ENCODE measurements at regions of chr18 and their contacts with region 1.

Region 1: GRCh38 chr18:11654736-11655605 is 34.1 kb upstream of the GNAL start:
- DNase-seq: peak; percentile 67
- H3K4me3 Mint-ChIP-seq: peak overlapping the region; percentile 24
- H3K27ac Mint-ChIP-seq: no peak overlapping the region
- H3K4me1 Mint-ChIP-seq: peaks cover 27% of the 10 kb centered on the region
- H3K27me3 Mint-ChIP-seq: no peaks in the 10 kb centered on the region
- CTCF ChIP-seq: peak; percentile 88

Region 2: GRCh38 chr18:10579079-10579867 is 1075.7 kb before region 1 on chr18:
- CTCF ChIA-PET with region 1: no interaction called
- POLR2A ChIA-PET with region 1: no interaction called
- intact Hi-C with region 1: no loop called
- DNase-seq: peak; percentile 11
- H3K4me3 Mint-ChIP-seq: no peak overlapping the region
- H3K27ac Mint-ChIP-seq: no peak overlapping the region
- H3K4me1 Mint-ChIP-seq: peaks cover 13% of the 10 kb centered on the region
- H3K27me3 Mint-ChIP-seq: no peaks in the 10 kb centered on the region
- CTCF ChIP-seq: no peak

Region 3: DNA sequence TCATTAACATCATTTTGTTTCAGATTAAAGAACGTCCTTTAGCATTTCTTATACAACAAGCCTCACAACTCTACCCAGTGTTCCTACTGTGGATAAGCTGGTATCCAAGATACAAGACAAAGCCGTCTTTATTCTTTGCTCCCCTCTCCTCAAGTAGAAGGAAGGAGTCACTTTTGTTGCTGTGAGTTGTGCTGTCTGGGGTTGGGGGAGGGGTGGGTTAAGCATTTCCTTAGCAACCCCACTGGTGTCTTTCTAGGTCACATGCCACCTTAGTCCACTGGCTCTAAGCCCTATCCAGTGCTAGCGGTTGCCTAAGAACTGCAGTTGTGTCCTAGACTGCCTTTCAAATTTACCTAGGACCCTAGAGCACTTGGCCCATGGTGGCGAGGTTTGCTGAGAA is 350.0 kb before region 1 on chr18:
- CTCF ChIA-PET with region 1: no interaction called
- POLR2A ChIA-PET with region 1: no interaction called
- intact Hi-C with region 1: no loop called
- DNase-seq: no peak
- H3K4me3 Mint-ChIP-seq: no peak overlapping the region
- H3K27ac Mint-ChIP-seq: no peak overlapping the region
- H3K4me1 Mint-ChIP-seq: peaks cover 7% of the 10 kb centered on the region
- H3K27me3 Mint-ChIP-seq: peaks cover 8% of the 10 kb centered on the region
- CTCF ChIP-seq: no peak

Region 4: DNA sequence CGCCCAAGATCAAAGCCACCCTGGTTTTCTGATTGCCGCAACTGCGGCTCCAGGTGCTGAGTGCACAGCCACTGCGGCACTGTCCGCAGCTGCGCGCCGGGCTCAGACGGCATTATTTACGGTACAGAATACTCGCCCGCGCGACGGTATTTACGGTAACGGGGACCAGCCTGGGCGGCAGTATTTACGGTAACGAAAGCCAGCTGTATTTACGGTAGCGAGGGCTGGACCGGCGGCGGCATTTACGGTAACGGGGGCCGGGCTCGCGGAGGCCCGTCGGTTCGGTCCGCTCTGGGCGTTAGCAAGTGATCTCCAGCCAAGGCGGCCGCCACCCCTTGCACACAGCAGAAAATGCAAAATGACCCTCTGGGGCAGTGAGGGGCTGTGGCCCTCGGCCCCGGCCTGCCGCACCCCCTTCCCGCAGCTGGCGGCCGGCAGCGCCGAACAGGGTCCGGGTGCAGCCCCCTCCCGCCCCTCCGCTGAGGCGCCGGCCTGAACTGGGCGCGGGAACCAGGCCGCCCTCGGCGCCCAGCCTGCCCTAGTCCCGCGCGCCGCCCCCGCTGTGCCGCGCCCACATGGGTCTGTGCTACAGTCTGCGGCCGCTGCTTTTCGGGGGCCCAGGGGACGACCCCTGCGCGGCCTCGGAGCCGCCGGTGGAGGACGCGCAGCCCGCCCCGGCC is 34.2 kb after region 1 on chr18 and contains the start of gene GNAL:
- CTCF ChIA-PET with region 1: interaction called, 10 read pairs
- POLR2A ChIA-PET with region 1: interaction called, 4 read pairs
- intact Hi-C with region 1: no loop called
- DNase-seq: peak; percentile 74
- H3K4me3 Mint-ChIP-seq: peak within 1 kb of the TSS; percentile 52
- H3K27ac Mint-ChIP-seq: no peak within 1 kb of the TSS
- H3K4me1 Mint-ChIP-seq: peaks cover 6% of the 10 kb centered on the region
- H3K27me3 Mint-ChIP-seq: no peaks in the 10 kb centered on the region
- CTCF ChIP-seq: no peak
- total RNA-seq, gene GNAL: 1.6 and 2.3 TPM in 2 replicates

Region 5: DNA sequence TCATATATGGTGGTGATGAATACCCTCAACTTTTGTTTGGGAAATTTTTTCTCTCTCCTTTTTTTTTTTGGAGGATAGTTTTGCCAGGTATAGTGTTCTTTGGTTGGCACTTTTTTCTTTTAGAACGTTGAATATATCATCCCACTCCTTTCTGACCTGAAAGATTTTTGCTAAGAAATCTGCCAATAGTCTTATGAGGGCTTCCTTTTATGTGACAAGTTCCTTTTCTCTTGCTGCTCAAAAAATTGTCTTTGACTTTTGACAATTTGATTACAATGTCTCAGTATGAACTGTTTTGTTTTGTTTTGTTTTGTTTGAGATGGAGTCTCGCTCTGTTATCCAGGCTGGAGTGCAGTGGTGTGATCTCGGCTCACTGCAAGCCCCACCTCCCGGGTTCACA is 55.6 kb after region 1 on chr18:
- CTCF ChIA-PET with region 1: interaction called, 11 read pairs
- POLR2A ChIA-PET with region 1: interaction called, 3 read pairs
- intact Hi-C with region 1: no loop called
- DNase-seq: no peak
- H3K4me3 Mint-ChIP-seq: no peak overlapping the region
- H3K27ac Mint-ChIP-seq: no peak overlapping the region
- H3K4me1 Mint-ChIP-seq: peaks cover 10% of the 10 kb centered on the region
- H3K27me3 Mint-ChIP-seq: no peaks in the 10 kb centered on the region
- CTCF ChIP-seq: no peak

Region 6: DNA sequence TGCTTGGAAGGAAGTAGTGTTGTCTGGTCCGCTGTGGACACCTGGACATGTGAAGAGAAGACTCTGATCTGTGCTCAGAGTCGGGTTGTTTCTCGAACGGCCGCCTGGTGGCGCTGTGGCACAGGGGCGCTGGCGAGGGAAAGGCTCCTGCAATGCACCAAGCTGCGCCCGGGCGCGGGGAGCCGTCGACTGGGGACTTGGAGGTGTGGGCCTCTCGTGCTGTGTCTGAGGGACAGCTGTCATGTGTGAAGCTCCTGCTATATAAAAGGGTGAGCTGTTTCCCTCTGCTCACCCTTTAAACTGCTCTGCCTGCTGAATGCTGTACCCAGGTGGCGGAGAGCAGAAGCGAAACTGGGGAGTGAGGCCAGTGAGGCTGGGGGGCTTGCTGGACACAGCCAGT is 78.1 kb after region 1 on chr18:
- CTCF ChIA-PET with region 1: interaction called, 347 read pairs
- POLR2A ChIA-PET with region 1: interaction called, 40 read pairs
- intact Hi-C with region 1: loop called (anchors 1 kb)
- DNase-seq: peak; percentile 75
- H3K4me3 Mint-ChIP-seq: peak overlapping the region; percentile 17
- H3K27ac Mint-ChIP-seq: no peak overlapping the region
- H3K4me1 Mint-ChIP-seq: no peaks in the 10 kb centered on the region
- H3K27me3 Mint-ChIP-seq: peaks cover 30% of the 10 kb centered on the region
- CTCF ChIP-seq: peak; percentile 90

Region 7: GRCh38 chr18:11851146-11851805 is 196.3 kb after region 1 on chr18 and contains the start of gene CHMP1B:
- CTCF ChIA-PET with region 1: interaction called, 5 read pairs
- POLR2A ChIA-PET with region 1: interaction called, 10 read pairs
- intact Hi-C with region 1: no loop called
- DNase-seq: peak; percentile 95
- H3K4me3 Mint-ChIP-seq: peak within 1 kb of the TSS; percentile 96
- H3K27ac Mint-ChIP-seq: peak within 1 kb of the TSS; percentile 99
- H3K4me1 Mint-ChIP-seq: peaks cover 12% of the 10 kb centered on the region
- H3K27me3 Mint-ChIP-seq: no peaks in the 10 kb centered on the region
- CTCF ChIP-seq: no peak
- total RNA-seq, gene CHMP1B: 39.7 and 50.1 TPM in 2 replicates

Region 8: DNA sequence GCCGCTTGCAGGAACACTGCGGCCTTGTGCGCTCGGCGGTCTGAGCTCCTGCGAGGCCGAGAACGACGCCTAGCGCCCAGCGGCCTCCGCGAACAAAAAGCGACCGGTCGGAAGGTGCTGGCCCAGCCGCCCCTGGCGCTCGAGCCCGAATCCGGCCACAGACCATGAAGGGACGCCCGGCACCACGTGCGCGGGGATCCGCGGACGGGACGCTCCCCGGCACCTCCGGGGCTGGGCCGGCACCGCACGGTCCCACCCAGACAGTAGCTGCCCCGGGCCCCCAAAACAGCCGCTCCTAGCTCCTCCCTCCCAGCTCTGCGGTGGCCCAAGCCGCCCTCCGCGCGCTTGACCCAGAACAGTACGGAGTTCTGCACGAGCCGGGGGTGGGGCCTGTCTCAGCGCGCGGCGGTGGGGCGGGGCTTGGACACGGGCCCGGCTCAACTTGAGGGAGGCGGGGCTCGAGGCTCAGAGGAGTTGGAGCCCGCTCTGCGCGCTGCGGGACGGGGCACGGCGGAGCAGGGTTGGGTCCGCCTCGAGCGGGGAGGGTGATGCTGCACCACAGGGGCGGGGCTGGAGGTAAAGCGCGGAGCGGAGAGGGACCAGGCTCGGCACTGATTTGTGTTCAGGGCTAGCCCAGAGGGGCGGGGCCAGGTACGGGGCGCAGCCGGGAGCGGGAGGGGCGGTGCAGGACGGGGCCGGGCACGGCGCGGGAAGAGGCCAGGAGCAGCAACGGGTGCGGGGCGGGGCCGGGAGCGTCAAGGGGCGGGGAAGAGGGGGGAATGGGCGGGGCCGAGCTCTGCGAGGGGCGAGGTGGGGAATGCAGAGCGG is 325.8 kb after region 1 on chr18:
- CTCF ChIA-PET with region 1: no interaction called
- POLR2A ChIA-PET with region 1: interaction called, 10 read pairs
- intact Hi-C with region 1: no loop called
- DNase-seq: peak; percentile 99
- H3K4me3 Mint-ChIP-seq: peak overlapping the region; percentile 75
- H3K27ac Mint-ChIP-seq: peak overlapping the region; percentile 94
- H3K4me1 Mint-ChIP-seq: peaks cover 10% of the 10 kb centered on the region
- H3K27me3 Mint-ChIP-seq: no peaks in the 10 kb centered on the region
- CTCF ChIP-seq: no peak